ENCODE measurements at regions of chr2 and their contacts with region 1.

Region 1: GRCh38 chr2:203814661-203815540 is 52.7 kb upstream of the CTLA4 start:
- DNase-seq: peak; percentile 70 to 87 (median 85)
- H3K4me3 ChIP-seq: peak overlapping the region in 1 of 7 experiments; percentile 26
- H3K27ac ChIP-seq: no peak overlapping the region
- H3K4me1 ChIP-seq: peaks cover 0 to 11% (median 7%) of the 10 kb centered on the region in 4 experiments
- H3K27me3 ChIP-seq: peaks cover 0 to 6% (median 0%) of the 10 kb centered on the region in 5 experiments

Region 2: DNA sequence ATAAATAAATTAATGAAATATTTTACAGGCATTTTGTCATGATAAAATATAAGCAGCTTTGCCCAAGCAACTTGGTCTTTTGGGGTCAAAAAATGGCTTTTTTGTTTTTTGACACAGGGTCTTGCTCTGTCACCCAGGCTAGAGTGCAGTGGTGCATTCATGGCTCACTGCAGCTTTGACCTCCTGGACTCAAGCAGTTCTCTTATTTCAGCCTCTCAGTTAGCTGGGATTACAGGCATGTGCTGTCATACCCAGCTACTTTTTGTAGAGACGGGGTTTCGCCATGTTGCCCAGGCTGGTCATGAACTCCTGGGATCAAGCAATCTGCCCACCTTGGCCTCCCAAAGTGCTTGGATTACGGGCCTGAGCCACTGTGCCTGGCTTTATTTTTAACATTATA is 435.7 kb before region 1 on chr2:
- CTCF ChIA-PET with region 1: no interaction called
- POLR2A ChIA-PET with region 1: no interaction called
- DNase-seq: no peak
- H3K4me3 ChIP-seq: no peak overlapping the region
- H3K27ac ChIP-seq: no peak overlapping the region
- H3K4me1 ChIP-seq: no peaks in the 10 kb centered on the region
- H3K27me3 ChIP-seq: no peaks in the 10 kb centered on the region

Region 3: GRCh38 chr2:203484266-203485112 is 330.4 kb before region 1 on chr2:
- CTCF ChIA-PET with region 1: interaction called, 110 read pairs
- POLR2A ChIA-PET with region 1: no interaction called
- DNase-seq: peak; percentile 59 to 76 (median 71)
- H3K4me3 ChIP-seq: no peak overlapping the region
- H3K27ac ChIP-seq: no peak overlapping the region
- H3K4me1 ChIP-seq: no peaks in the 10 kb centered on the region
- H3K27me3 ChIP-seq: no peaks in the 10 kb centered on the region

Region 4: DNA sequence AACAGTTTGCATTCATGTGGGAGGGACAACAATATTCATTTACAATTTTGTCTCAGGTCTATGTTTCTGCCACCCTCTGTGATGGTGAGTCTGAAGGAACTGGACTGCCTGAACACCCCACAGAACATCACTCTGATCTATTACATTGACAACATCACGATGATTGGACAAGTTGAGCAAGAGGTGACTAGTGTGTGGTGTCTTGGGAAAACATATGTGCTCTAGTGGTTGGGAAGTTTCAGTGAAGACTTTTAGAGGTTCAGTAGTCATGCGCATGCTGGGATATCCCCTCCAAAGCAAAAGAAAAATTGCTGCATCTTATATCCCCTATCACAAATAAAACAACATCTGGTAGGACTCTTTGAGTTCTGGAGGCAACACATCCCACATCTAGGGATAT is 34.1 kb after region 1 on chr2:
- CTCF ChIA-PET with region 1: no interaction called
- POLR2A ChIA-PET with region 1: no interaction called
- DNase-seq: no peak
- H3K4me3 ChIP-seq: no peak overlapping the region
- H3K27ac ChIP-seq: no peak overlapping the region
- H3K4me1 ChIP-seq: no peaks in the 10 kb centered on the region
- H3K27me3 ChIP-seq: no peaks in the 10 kb centered on the region

Region 5: DNA sequence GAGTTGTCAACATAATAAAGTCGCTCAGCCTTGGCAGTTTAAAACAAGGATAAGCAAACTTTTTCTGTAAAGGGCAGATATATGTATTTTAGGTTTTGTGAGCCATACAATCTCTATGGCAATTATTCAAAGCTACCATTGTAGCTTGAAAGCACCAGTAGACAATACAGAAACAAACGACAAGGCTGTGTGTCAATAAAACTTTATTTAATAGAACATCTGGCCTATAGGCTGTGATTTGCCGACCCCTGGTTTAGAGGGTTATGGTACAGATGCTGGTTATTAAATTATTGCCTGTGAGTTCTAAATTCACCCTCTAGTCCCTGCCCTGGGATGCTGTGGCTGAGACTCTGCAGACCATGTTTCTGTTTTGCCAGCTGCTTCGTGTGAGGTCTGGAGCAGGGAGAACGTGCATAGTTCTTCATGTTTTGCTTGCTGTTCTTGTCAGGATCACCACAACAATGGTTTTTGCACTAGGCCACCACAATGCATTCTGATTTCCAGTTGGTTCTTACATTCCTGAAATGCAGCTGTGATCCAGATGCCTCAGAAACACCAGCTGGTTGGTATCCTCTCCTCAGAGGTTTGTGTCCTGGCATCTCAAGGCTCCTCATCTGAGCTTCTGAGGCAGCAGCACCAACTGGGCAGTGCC is 168.3 kb after region 1 on chr2:
- CTCF ChIA-PET with region 1: no interaction called
- POLR2A ChIA-PET with region 1: no interaction called
- DNase-seq: no peak
- H3K4me3 ChIP-seq: no peak overlapping the region
- H3K27ac ChIP-seq: no peak overlapping the region
- H3K4me1 ChIP-seq: no peaks in the 10 kb centered on the region
- H3K27me3 ChIP-seq: peaks cover 0 to 4% (median 1%) of the 10 kb centered on the region in 5 experiments

Region 6: GRCh38 chr2:204072443-204073324 is 257.8 kb after region 1 on chr2:
- CTCF ChIA-PET with region 1: no interaction called
- POLR2A ChIA-PET with region 1: no interaction called
- DNase-seq: peak; percentile 13 to 43 (median 20)
- H3K4me3 ChIP-seq: no peak overlapping the region
- H3K27ac ChIP-seq: no peak overlapping the region
- H3K4me1 ChIP-seq: no peaks in the 10 kb centered on the region
- H3K27me3 ChIP-seq: peaks cover 0 to 2% (median 0%) of the 10 kb centered on the region in 5 experiments